ENCODE measurements at regions of chr18 and their contacts with region 1.

Region 1: DNA sequence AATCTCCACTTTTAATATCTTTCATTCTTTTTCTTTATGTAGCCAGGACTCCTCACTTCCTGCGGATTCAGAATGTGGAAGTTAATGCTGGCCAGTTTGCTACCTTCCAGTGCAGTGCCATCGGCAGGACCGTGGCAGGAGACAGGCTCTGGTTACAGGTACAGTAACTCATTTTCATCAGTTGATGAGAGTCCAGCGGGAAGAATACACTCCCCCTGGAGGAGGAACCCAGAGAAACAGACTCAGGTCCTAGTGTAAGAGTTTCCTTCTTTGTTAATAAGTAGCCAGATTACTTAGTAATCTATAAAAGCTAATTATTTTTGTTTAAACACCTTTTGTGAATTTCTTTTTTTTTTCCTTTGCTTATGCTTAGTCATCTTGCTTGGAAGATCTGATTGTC is 359.4 kb downstream of the PTPRM start:
- DNase-seq: peak in 1 of 2 experiments; percentile 33
- H3K4me3 ChIP-seq: no peak overlapping the region
- H3K4me3 Mint-ChIP-seq: no peak overlapping the region
- H3K27ac Mint-ChIP-seq: no peak overlapping the region
- H3K4me1 ChIP-seq: peaks cover 11% of the 10 kb centered on the region
- H3K4me1 Mint-ChIP-seq: peaks cover 10% of the 10 kb centered on the region
- H3K27me3 ChIP-seq: no peaks in the 10 kb centered on the region
- H3K27me3 Mint-ChIP-seq: no peaks in the 10 kb centered on the region
- CTCF ChIP-seq: peak; percentile 15 to 36

Region 2: GRCh38 chr18:7789856-7790552 is 136.5 kb before region 1 on chr18:
- CTCF ChIA-PET with region 1: interaction called, 4 read pairs
- POLR2A ChIA-PET with region 1: no interaction called
- intact Hi-C with region 1: loop called (anchors 10 kb)
- DNase-seq: peak in 1 of 2 experiments; percentile 44
- H3K4me3 ChIP-seq: no peak overlapping the region
- H3K4me3 Mint-ChIP-seq: no peak overlapping the region
- H3K27ac Mint-ChIP-seq: no peak overlapping the region
- H3K4me1 ChIP-seq: peaks cover 13% of the 10 kb centered on the region
- H3K4me1 Mint-ChIP-seq: peaks cover 14% of the 10 kb centered on the region
- H3K27me3 ChIP-seq: no peaks in the 10 kb centered on the region
- H3K27me3 Mint-ChIP-seq: no peaks in the 10 kb centered on the region
- CTCF ChIP-seq: peak; percentile 52 to 56

Measured in Caco-2 (cell line).